CD8-positive, alpha-beta T cell (primary cell): ENCODE measurements at regions of chr12 and their contacts with region 1.

Region 1: GRCh38 chr12:62522984-62523383 is 56.4 kb downstream of the MON2 start:
- DNase-seq: peak in 1 of 9 experiments; percentile 14
- ATAC-seq: no peak
- H3K4me3 ChIP-seq: no peak overlapping the region
- H3K4me3 Mint-ChIP-seq: no peak overlapping the region
- H3K27ac ChIP-seq: no peak overlapping the region
- H3K27ac Mint-ChIP-seq: no peak overlapping the region
- H3K4me1 ChIP-seq: peaks cover 4% of the 10 kb centered on the region
- H3K4me1 Mint-ChIP-seq: peaks cover 29% of the 10 kb centered on the region
- H3K27me3 ChIP-seq: no peaks in the 10 kb centered on the region
- H3K27me3 Mint-ChIP-seq: no peaks in the 10 kb centered on the region
- CTCF ChIP-seq: no peak

Region 2: DNA sequence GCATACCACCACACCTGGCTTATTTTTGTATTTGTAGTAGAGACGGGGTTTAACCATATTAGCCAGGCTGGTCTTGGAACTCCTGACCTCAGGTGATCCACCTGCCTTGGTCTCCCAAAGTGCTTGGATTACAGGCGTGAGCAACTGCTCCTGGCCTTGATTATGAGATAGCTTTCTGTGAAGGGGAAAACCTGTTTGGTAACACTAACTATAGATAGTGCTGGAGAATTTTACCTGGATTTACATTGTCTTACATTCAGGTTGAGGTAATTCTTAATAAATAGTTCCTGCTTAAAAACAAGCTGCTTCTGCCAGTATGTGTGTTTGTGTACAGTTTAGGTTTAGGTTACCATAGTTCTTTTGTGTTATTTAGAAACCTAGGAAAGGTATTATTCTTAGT is 20.8 kb after region 1 on chr12:
- CTCF ChIA-PET with region 1: no interaction called
- POLR2A ChIA-PET with region 1: no interaction called
- intact Hi-C with region 1: loop called in 1 of 2 experiments (anchors 2 kb)
- DNase-seq: no peak
- ATAC-seq: no peak
- H3K4me3 ChIP-seq: no peak overlapping the region
- H3K4me3 Mint-ChIP-seq: no peak overlapping the region
- H3K27ac ChIP-seq: no peak overlapping the region
- H3K27ac Mint-ChIP-seq: no peak overlapping the region
- H3K4me1 ChIP-seq: no peaks in the 10 kb centered on the region
- H3K4me1 Mint-ChIP-seq: no peaks in the 10 kb centered on the region
- H3K27me3 ChIP-seq: no peaks in the 10 kb centered on the region
- H3K27me3 Mint-ChIP-seq: no peaks in the 10 kb centered on the region
- CTCF ChIP-seq: no peak

Region 3: GRCh38 chr12:63042646-63043045 is 519.7 kb after region 1 on chr12:
- CTCF ChIA-PET with region 1: no interaction called
- POLR2A ChIA-PET with region 1: no interaction called
- intact Hi-C with region 1: no loop called
- DNase-seq: no peak
- ATAC-seq: no peak
- H3K4me3 ChIP-seq: no peak overlapping the region
- H3K4me3 Mint-ChIP-seq: no peak overlapping the region
- H3K27ac ChIP-seq: no peak overlapping the region
- H3K27ac Mint-ChIP-seq: no peak overlapping the region
- H3K4me1 ChIP-seq: no peaks in the 10 kb centered on the region
- H3K4me1 Mint-ChIP-seq: no peaks in the 10 kb centered on the region
- H3K27me3 ChIP-seq: no peaks in the 10 kb centered on the region
- H3K27me3 Mint-ChIP-seq: no peaks in the 10 kb centered on the region
- CTCF ChIP-seq: no peak